T-cell (primary cell): ENCODE measurements at regions of chr9 and their contacts with region 1.

Region 1: DNA sequence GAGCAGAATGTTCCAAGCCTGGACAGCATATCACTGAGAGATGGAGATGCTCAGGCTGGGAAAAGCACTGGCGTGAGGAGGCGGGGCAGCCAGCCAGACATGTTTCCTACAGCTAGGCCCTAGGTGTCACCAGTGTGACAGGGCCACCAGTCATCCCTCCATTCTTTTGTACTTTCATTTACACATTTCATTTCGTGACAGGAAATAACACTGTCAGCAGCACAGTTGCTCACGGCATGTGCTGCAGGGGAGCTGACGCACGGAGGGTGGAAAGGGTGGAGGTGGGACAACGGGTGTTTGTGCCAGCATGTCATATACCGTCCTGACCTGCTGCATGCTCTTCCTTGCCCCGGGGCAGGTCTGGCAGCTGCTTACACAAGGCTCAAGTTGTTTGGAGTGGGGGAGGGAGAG is 14.8 kb upstream of the CEMIP2 start:
- DNase-seq: peak; percentile 67 to 97 (median 90)
- ATAC-seq: peak; percentile 91 to 96 (median 94)
- H3K4me3 ChIP-seq: no peak overlapping the region
- H3K4me3 Mint-ChIP-seq: peak overlapping the region; percentile 59 to 68 (median 62)
- H3K27ac ChIP-seq: peak overlapping the region; percentile 94
- H3K27ac Mint-ChIP-seq: peak overlapping the region; percentile 97 to 99
- H3K4me1 ChIP-seq: peaks cover 29 to 32% of the 10 kb centered on the region in 2 experiments
- H3K4me1 Mint-ChIP-seq: peaks cover 46 to 50% (median 47%) of the 10 kb centered on the region in 3 donors
- H3K27me3 ChIP-seq: no peaks in the 10 kb centered on the region
- H3K27me3 Mint-ChIP-seq: no peaks in the 10 kb centered on the region

Region 2: DNA sequence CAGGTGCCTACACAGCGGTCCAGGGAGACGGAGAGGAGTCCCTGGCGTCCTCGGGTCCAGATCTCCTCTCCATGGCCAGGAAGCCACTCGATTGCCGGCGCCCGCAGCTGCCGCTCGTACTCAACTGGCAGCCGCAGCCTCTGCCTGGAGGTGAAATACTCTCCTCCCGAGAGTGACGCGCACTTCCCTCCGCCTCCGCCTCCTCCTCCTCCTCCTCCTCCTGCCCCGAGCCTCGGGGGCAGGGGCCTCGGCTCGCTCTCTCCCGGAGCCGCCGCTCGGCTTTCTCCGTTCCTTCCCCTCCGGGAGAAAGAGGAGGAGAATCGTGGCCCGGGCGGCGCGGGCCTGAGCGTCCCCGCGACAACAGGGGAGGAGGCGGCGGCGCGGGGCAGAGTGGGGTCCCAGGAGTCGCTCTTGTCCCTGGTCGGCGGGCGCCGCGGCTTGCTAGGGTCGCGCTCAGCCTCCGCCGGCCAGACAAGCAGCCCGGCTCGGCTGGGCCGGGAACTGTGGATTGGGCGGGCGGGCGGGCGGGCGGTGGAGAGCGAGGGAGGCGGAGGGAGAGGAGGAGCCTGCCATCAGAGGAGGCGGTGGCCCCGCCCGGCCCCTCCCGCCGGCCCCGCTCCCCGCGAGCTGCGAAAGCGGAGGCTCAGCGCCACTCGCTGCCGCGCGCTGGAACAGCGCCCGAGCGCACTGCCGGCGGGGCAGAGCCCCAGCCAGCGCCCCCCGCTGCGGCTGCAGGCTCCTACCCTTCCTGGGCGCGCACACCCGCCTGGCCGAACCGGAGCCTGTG is 14.5 kb before region 1 on chr9 and contains the start of gene CEMIP2:
- CTCF ChIA-PET with region 1: interaction called in 1 of 2 experiments, 12 read pairs
- POLR2A ChIA-PET with region 1: interaction called, 12 to 13 read pairs
- DNase-seq: peak; percentile 73 to 93 (median 88)
- ATAC-seq: peak; percentile 82 to 90 (median 86)
- H3K4me3 ChIP-seq: peak within 1 kb of the TSS; percentile 82 to 97
- H3K4me3 Mint-ChIP-seq: peak within 1 kb of the TSS; percentile 95 to 99 (median 98)
- H3K27ac ChIP-seq: peak within 1 kb of the TSS; percentile 95
- H3K27ac Mint-ChIP-seq: peak within 1 kb of the TSS; percentile 93 to 97
- H3K4me1 ChIP-seq: peaks cover 34 to 39% of the 10 kb centered on the region in 2 experiments
- H3K4me1 Mint-ChIP-seq: peaks cover 38 to 52% (median 39%) of the 10 kb centered on the region in 3 donors
- H3K27me3 ChIP-seq: no peaks in the 10 kb centered on the region
- H3K27me3 Mint-ChIP-seq: no peaks in the 10 kb centered on the region
- total RNA-seq, gene CEMIP2: 82.1 to 285 (median 90.8) TPM

Region 3: DNA sequence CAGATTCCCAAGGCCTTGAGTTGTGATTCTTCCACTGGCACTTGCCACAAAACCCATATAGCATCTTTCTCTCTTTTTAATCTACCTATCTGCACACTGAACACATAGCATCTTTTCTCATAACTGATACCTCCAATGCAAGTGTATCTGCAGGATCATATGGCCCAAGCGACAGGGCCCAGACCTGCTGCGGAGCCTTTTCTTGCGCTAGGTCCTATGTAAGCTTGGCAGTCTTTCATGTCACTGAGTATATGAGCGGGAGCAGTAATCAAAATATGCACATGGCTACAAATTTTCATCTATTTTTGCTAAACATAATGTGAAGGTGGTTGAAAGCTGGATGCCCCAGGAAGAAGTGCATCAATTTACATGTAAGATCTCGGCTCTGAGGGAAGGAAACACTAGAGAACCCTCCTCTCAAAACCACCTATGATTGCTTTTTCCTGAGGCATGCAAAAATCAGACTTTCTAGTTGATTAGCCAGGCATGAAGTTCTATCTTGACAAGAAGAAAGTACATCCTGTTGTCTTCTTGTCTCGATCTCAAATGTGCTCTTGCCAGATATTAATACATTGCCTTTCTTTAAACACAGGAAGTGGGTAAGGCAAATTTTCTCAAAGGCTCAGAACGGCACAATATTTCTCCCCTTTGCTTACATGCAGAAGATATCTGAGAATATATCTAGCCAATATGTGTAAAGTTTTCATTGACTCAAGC is 12.1 kb after region 1 on chr9:
- CTCF ChIA-PET with region 1: interaction called, 5 to 12 read pairs
- POLR2A ChIA-PET with region 1: interaction called, 3 to 5 read pairs
- DNase-seq: peak in 21 of 35 experiments; percentile 9 to 79 (median 22)
- ATAC-seq: peak; percentile 91 to 94 (median 93)
- H3K4me3 ChIP-seq: peak overlapping the region in 1 of 2 donors; percentile 19
- H3K4me3 Mint-ChIP-seq: peak overlapping the region; percentile 42 to 71 (median 62)
- H3K27ac ChIP-seq: peak overlapping the region; percentile 69
- H3K27ac Mint-ChIP-seq: peak overlapping the region; percentile 99 to 100
- H3K4me1 ChIP-seq: peaks cover 46 to 54% of the 10 kb centered on the region in 2 experiments
- H3K4me1 Mint-ChIP-seq: peaks cover 68 to 75% (median 74%) of the 10 kb centered on the region in 3 donors
- H3K27me3 ChIP-seq: no peaks in the 10 kb centered on the region
- H3K27me3 Mint-ChIP-seq: no peaks in the 10 kb centered on the region

Region 4: DNA sequence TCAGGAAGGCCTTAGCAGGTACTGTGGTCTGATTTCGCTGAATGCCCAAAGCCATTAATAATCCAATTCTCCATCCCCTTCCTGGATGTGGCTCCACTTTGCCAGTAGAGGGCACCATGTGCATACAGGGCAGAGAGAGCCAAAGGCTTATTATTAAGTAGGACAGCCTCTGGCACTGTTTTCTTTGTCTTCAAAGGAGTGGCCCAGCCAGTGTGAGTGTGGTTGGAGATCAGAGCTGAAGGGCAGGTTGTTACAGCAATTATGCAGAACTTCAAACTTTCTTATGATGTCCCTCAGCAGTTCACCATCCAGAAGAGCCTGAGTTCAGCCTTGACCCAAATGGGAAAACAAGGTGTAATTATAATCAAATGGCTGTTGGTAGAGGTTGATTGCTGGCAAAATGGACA is 23.8 kb after region 1 on chr9:
- CTCF ChIA-PET with region 1: interaction called, 22 to 44 read pairs
- POLR2A ChIA-PET with region 1: interaction called, 5 to 6 read pairs
- DNase-seq: peak; percentile 23 to 77 (median 47)
- ATAC-seq: peak; percentile 74 to 93 (median 90)
- H3K4me3 ChIP-seq: no peak overlapping the region
- H3K4me3 Mint-ChIP-seq: no peak overlapping the region
- H3K27ac ChIP-seq: no peak overlapping the region
- H3K27ac Mint-ChIP-seq: peak overlapping the region; percentile 21 to 40
- H3K4me1 ChIP-seq: peaks cover 4 to 5% of the 10 kb centered on the region in 2 experiments
- H3K4me1 Mint-ChIP-seq: peaks cover 11 to 15% (median 13%) of the 10 kb centered on the region in 3 donors
- H3K27me3 ChIP-seq: no peaks in the 10 kb centered on the region
- H3K27me3 Mint-ChIP-seq: no peaks in the 10 kb centered on the region

Region 5: GRCh38 chr9:71844808-71845207 is 61.7 kb after region 1 on chr9:
- CTCF ChIA-PET with region 1: no interaction called
- POLR2A ChIA-PET with region 1: no interaction called
- DNase-seq: no peak
- ATAC-seq: no peak
- H3K4me3 ChIP-seq: no peak overlapping the region
- H3K4me3 Mint-ChIP-seq: no peak overlapping the region
- H3K27ac ChIP-seq: no peak overlapping the region
- H3K27ac Mint-ChIP-seq: no peak overlapping the region
- H3K4me1 ChIP-seq: no peaks in the 10 kb centered on the region
- H3K4me1 Mint-ChIP-seq: no peaks in the 10 kb centered on the region
- H3K27me3 ChIP-seq: no peaks in the 10 kb centered on the region
- H3K27me3 Mint-ChIP-seq: no peaks in the 10 kb centered on the region